Breast epithelium (tissue), 4 donors: ENCODE measurements at regions of chr22 and their contacts with region 1.

Region 1: GRCh38 chr22:19523240-19524169 is 705 bp downstream of the CLDN5 start:
- DNase-seq: no peak
- H3K4me3 ChIP-seq: peak overlapping the region; percentile 38 to 65 (median 44)
- H3K27ac ChIP-seq: peak overlapping the region; percentile 36 to 85
- H3K4me1 ChIP-seq: peaks cover 0 to 3% of the 10 kb centered on the region in 2 donors
- H3K27me3 ChIP-seq: peaks cover 0 to 51% of the 10 kb centered on the region in 2 donors
- CTCF ChIP-seq: no peak
- POLR2A ChIP-seq: no peak

Region 2: GRCh38 chr22:19419464-19420178 is 103.9 kb before region 1 on chr22:
- intact Hi-C with region 1: no loop called
- DNase-seq: no peak
- H3K4me3 ChIP-seq: no peak overlapping the region
- H3K27ac ChIP-seq: no peak overlapping the region
- H3K4me1 ChIP-seq: no peaks in the 10 kb centered on the region
- H3K27me3 ChIP-seq: no peaks in the 10 kb centered on the region
- CTCF ChIP-seq: no peak
- POLR2A ChIP-seq: no peak

Region 3: DNA sequence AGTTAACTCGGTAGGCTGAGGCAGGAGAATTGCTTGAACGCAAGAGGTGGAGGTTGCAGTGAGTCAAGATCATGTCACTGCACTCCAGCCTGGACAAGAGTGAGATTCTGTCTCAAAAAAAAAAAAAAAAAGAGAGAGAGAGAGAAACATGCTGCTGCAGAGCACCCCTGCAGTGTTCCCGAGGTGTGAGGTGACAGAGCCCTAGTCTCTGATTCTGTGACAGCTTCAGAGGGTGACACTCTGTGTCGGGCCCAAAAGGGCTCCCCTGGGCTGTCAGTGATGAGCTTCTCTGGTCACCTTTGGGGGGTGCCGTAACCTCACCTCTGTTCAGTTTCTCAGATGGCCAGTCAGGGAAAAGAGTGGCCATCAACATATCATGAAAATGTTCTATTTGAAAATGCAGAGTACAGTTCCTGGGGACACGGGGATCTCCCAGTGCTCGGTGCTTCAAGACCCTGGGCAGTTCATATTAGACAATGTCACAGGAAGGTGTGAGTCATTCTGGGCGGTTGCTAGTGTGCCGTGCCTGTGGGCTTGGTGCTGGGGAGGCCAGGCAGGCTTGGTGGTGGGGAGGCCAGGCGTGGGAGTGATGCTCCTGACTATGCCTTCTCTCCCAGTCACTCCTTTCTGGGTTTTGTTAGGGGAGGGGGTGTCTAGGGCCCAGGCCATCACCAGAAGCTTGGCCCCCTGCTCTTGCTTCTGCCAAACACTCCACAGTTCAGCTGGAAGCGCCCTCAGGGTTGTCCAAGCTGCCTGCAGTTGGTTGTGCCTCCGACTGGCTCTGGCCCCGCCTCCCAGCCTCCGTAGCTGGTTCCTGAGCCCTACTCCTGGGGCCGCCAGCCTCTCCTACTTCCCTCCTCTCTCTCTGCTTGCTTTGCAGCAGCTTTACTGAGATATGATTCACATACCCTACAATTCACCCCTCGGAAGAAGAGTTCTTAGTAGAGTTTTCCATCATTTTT is 53.2 kb after region 1 on chr22:
- intact Hi-C with region 1: loop called (anchors 10 kb)
- DNase-seq: no peak
- H3K4me3 ChIP-seq: no peak overlapping the region
- H3K27ac ChIP-seq: peak overlapping the region; percentile 10 to 69
- H3K4me1 ChIP-seq: no peaks in the 10 kb centered on the region
- H3K27me3 ChIP-seq: peaks cover 0 to 6% of the 10 kb centered on the region in 2 donors
- CTCF ChIP-seq: no peak
- POLR2A ChIP-seq: no peak

Region 4: GRCh38 chr22:19619144-19620009 is 95.9 kb after region 1 on chr22:
- intact Hi-C with region 1: loop called (anchors 10 kb)
- DNase-seq: no peak
- H3K4me3 ChIP-seq: no peak overlapping the region
- H3K27ac ChIP-seq: no peak overlapping the region
- H3K4me1 ChIP-seq: no peaks in the 10 kb centered on the region
- H3K27me3 ChIP-seq: no peaks in the 10 kb centered on the region
- CTCF ChIP-seq: no peak
- POLR2A ChIP-seq: no peak